GM10248 (cell line): ENCODE measurements at regions of chr20 and their contacts with region 1.

Region 1: DNA sequence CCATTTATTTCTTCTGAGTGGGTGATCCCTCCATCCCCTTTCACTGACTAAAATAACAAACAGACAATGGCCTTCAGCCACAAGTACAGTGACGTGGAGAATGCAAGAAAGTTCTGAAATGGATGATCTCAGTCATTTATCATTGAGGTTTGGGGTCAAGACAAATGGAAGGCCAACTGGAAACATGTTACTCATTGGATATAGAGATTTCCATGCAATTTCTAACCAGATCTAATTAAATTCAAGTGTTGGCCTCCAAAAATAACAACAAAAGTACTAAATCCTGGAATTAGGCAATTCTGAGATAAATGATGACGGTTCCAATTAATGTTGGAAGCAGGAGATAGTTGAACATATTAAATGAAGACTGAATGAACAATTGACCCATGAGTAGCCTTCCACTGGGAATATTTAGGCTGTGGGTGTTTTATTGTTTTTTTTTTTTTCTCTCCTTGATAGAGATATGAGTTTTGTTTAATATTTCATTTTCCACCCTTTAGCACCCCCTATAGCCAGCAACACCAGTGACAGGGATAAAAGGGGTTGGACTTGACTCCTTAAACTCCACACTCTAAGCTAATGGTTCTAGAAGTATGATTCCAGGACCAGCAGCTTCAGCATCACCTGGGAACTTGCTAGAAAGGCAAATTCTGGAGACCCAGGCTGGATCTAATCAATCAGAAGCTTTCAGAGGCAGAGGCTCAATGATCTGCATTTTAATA is 112.8 kb downstream of the BCAS1 start:
- DNase-seq: no peak
- CTCF ChIP-seq: no peak

Region 2: GRCh38 chr20:53970232-53970631 is 12.6 kb after region 1 on chr20:
- CTCF ChIA-PET with region 1: interaction called, 10 read pairs
- POLR2A ChIA-PET with region 1: no interaction called
- DNase-seq: no peak
- CTCF ChIP-seq: no peak